A549 (cell line): ENCODE measurements at regions of chr3 and their contacts with region 1.

Region 1: GRCh38 chr3:197186887-197187588 is 111.4 kb downstream of the DLG1 start:
- DNase-seq: peak; percentile 4 to 62
- ATAC-seq: peak; percentile 62 to 88; a peak in 4 of 6 replicates
- H3K4me3 ChIP-seq: no peak overlapping the region
- H3K27ac ChIP-seq: no peak overlapping the region
- H3K4me1 ChIP-seq: peaks cover 15% of the 10 kb centered on the region
- CTCF ChIP-seq: peak; percentile 82
- EP300 ChIP-seq: no peak
- POLR2A ChIP-seq: no peak
- RAD21 ChIP-seq: peak; percentile 71 to 76

Region 2: DNA sequence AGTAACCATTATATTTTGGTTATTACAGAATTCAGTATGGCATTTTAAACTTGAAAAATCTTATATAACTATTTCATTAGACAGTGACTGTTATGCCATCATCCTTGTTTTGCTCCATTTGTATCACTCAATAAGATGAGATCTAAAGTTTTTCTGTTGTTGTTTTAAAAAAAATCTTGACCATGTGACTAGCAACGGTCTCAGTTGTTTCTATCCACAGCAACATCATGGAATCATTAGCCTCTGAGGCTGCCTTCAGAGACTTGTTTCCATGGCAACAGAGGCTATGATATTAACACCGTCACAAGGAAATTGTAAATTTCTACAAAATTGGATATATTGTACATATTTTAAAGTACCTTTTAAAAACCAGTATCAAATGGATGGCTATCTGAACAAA is 18.4 kb before region 1 on chr3:
- CTCF ChIA-PET with region 1: interaction called, 10 read pairs
- POLR2A ChIA-PET with region 1: no interaction called
- DNase-seq: peak in 1 of 2 experiments; percentile 8
- ATAC-seq: no peak
- H3K4me3 ChIP-seq: no peak overlapping the region
- H3K27ac ChIP-seq: no peak overlapping the region
- H3K4me1 ChIP-seq: no peaks in the 10 kb centered on the region
- CTCF ChIP-seq: no peak
- EP300 ChIP-seq: no peak
- POLR2A ChIP-seq: no peak
- RAD21 ChIP-seq: no peak